BJ (cell line): ENCODE measurements at regions of chr5 and their contacts with region 1.

Region 1: GRCh38 chr5:150486402-150487198 is 21.3 kb upstream of the NDST1 start:
- DNase-seq: no peak
- H3K4me3 ChIP-seq: peak overlapping the region; percentile 97
- H3K27me3 ChIP-seq: no peaks in the 10 kb centered on the region
- CTCF ChIP-seq: no peak

Region 2: GRCh38 chr5:150523472-150524350 is 37.1 kb after region 1 on chr5:
- CTCF ChIA-PET with region 1: interaction called, 12 read pairs
- POLR2A ChIA-PET with region 1: no interaction called
- DNase-seq: no peak
- H3K4me3 ChIP-seq: no peak overlapping the region
- H3K27me3 ChIP-seq: no peaks in the 10 kb centered on the region
- CTCF ChIP-seq: peak; percentile 74

Region 3: GRCh38 chr5:151699071-151699901 is 1212.7 kb after region 1 on chr5:
- CTCF ChIA-PET with region 1: no interaction called
- POLR2A ChIA-PET with region 1: interaction called, 10 read pairs
- DNase-seq: peak; percentile 93
- H3K4me3 ChIP-seq: no peak overlapping the region
- H3K27me3 ChIP-seq: no peaks in the 10 kb centered on the region
- CTCF ChIP-seq: no peak